ENCODE measurements at regions of chr12 and their contacts with region 1.

Region 1: DNA sequence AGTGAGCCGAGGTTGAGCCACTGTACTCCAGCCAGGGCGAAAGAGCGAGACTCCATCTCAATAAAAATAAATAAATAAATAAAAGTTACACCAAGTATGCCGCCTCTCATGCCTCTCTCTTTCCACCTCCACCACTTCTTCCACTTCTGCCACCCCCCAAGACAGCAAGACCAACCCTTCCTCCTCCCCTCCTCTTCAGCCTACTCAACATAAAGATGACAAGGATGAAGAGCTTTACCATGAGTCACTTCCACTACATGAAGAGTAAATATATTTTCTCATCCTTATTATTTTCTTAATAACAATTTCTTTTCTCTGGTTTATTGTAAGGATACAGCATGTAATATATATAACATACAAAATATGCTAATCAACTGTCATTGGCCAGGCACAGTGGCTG is 3.6 kb upstream of the TMED2 start:
- DNase-seq: no peak
- H3K4me3 ChIP-seq: no peak overlapping the region
- H3K27ac ChIP-seq: no peak overlapping the region
- H3K4me1 ChIP-seq: peaks cover 11% of the 10 kb centered on the region
- H3K27me3 ChIP-seq: no peaks in the 10 kb centered on the region
- CTCF ChIP-seq: no peak

Region 2: DNA sequence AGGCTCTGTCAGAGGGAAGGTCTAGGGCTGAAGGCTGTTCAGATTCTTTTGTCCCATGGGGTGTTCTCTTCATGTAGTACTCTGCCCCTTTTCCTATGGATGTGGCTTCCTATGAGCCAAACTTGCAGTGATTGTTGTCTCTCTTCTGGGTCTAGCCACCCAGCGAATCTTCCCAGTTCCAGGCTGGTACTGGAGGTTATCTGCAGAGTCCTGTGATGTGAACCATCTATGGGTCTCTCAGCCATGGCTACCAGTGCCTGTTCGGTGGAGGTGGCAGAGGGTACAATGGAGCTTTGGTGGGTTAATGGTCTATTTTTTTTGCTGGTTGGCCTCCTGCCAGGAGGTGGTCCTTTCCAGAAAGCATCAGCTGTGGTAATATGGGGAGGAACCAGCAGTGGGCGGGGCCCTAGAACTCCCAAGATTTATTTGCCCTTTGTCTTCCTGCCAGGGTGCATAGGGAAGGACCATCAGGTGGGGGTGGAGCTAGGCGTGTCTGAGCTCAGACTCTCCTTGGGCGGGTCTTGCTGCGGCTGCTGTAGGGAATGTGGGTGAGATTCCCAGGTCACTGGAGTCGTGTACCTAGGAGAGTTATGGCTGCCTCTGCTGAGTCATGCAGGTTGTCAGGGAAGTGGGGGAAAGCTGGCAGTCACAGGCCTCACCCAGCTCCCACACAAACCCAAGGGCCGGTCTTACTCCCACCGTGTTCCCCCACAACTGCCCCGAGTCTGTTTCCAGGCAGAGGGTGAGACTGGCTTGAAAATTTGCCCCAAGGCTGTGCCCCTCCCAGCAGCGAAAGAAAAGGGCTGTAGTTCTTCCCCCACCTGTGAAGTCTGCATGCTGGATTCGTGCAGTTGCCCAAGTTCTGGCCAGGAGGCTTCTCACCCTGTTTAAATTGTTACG is 330.0 kb before region 1 on chr12:
- CTCF ChIA-PET with region 1: no interaction called
- dilution Hi-C with region 1: no loop called
- in situ Hi-C with region 1: no loop called
- intact Hi-C with region 1: loop called (anchors 1 kb)
- DNase-seq: peak; percentile 92
- H3K4me3 ChIP-seq: peak overlapping the region in 1 of 3 experiments; percentile 11
- H3K27ac ChIP-seq: peak overlapping the region; percentile 91
- H3K4me1 ChIP-seq: peaks cover 23% of the 10 kb centered on the region
- H3K27me3 ChIP-seq: no peaks in the 10 kb centered on the region
- CTCF ChIP-seq: no peak

Region 3: GRCh38 chr12:123436017-123436964 is 144.5 kb before region 1 on chr12 and contains the start of gene RILPL2:
- CTCF ChIA-PET with region 1: no interaction called
- dilution Hi-C with region 1: no loop called
- in situ Hi-C with region 1: no loop called
- intact Hi-C with region 1: loop called (anchors 2 kb)
- DNase-seq: peak; percentile 87
- H3K4me3 ChIP-seq: peak within 1 kb of the TSS; percentile 60 to 74 (median 69)
- H3K27ac ChIP-seq: peak within 1 kb of the TSS; percentile 51
- H3K4me1 ChIP-seq: peaks cover 8% of the 10 kb centered on the region
- H3K27me3 ChIP-seq: no peaks in the 10 kb centered on the region
- CTCF ChIP-seq: no peak
- total RNA-seq, gene RILPL2: 1.7 to 4.1 TPM

Region 4: GRCh38 chr12:123478762-123479161 is 102.0 kb before region 1 on chr12:
- CTCF ChIA-PET with region 1: interaction called, 10 read pairs
- dilution Hi-C with region 1: no loop called
- in situ Hi-C with region 1: no loop called
- intact Hi-C with region 1: no loop called
- DNase-seq: no peak
- H3K4me3 ChIP-seq: no peak overlapping the region
- H3K27ac ChIP-seq: no peak overlapping the region
- H3K4me1 ChIP-seq: no peaks in the 10 kb centered on the region
- H3K27me3 ChIP-seq: no peaks in the 10 kb centered on the region
- CTCF ChIP-seq: no peak

Region 5: DNA sequence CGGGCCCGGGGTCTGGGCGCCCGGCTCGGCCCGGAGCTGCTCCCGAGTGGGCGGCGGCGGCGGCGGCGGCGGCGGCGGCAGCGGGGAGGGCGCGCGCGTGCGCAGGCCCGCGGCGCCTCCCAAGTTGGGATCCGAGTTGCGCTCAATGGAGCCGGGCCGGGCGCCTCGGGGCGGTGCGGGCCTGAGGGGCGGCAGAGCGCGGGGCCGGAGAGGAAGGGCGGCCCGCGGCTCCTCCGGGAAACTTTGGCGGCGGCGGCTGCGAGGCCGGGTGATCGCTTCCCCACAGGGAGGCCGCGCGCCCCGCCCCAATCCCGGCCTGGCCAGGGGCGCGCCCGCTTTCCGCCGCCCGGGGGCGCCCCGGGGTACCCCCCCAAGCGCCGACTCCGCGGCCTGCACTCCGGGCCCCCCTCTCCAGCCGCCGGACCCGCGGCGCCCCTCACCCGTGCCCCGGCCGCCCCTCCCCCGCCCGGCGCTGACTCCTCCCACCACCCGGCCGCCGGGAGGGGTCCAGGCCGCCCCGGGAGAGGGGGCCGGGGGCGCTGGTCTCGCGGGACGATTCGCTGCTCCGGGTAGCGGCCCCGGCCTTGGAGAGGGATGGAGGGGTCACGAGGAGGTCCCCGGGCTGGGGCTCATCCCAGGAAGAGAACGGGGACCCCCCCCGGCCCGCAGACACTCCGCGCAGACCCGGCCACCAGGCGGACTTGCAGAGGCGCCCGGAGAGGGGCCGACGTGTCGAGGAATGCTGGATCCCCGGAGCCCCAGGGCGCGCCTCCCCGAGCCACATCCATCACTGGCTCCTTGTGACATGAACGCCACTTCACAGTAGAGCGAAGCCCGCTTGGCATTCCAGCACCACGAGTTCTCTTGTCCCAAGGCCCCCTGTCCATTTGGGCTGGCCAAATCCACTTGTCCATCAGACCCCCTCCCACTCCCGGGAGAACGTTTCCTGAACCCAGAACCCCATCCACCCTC is 46.8 kb before region 1 on chr12 and contains the start of gene RILPL1:
- CTCF ChIA-PET with region 1: no interaction called
- dilution Hi-C with region 1: no loop called
- in situ Hi-C with region 1: loop called in 1 of 2 experiments (anchors 5 kb)
- intact Hi-C with region 1: loop called (anchors 1 kb)
- DNase-seq: peak; percentile 29
- H3K4me3 ChIP-seq: peak within 1 kb of the TSS; percentile 52 to 91 (median 87)
- H3K27ac ChIP-seq: peak within 1 kb of the TSS; percentile 15
- H3K4me1 ChIP-seq: peaks cover 10% of the 10 kb centered on the region
- H3K27me3 ChIP-seq: no peaks in the 10 kb centered on the region
- CTCF ChIP-seq: peak in 1 of 2 donors; percentile 36
- total RNA-seq, gene RILPL1: 14.0 to 24.3 TPM

Region 6: GRCh38 chr12:123671876-123672275 is 91.1 kb after region 1 on chr12:
- CTCF ChIA-PET with region 1: no interaction called
- dilution Hi-C with region 1: no loop called
- in situ Hi-C with region 1: no loop called
- intact Hi-C with region 1: no loop called
- DNase-seq: no peak
- H3K4me3 ChIP-seq: peak overlapping the region in 2 of 3 experiments; percentile 64 to 82
- H3K27ac ChIP-seq: no peak overlapping the region
- H3K4me1 ChIP-seq: peaks cover 17% of the 10 kb centered on the region
- H3K27me3 ChIP-seq: no peaks in the 10 kb centered on the region
- CTCF ChIP-seq: no peak